AG04449 (cell line): ENCODE measurements at regions of chr5 and their contacts with region 1.

Region 1: GRCh38 chr5:149228618-149229297 is 42.9 kb upstream of the AFAP1L1 start:
- DNase-seq: peak; percentile 55
- H3K4me3 ChIP-seq: no peak overlapping the region
- CTCF ChIP-seq: peak; percentile 67

Region 2: DNA sequence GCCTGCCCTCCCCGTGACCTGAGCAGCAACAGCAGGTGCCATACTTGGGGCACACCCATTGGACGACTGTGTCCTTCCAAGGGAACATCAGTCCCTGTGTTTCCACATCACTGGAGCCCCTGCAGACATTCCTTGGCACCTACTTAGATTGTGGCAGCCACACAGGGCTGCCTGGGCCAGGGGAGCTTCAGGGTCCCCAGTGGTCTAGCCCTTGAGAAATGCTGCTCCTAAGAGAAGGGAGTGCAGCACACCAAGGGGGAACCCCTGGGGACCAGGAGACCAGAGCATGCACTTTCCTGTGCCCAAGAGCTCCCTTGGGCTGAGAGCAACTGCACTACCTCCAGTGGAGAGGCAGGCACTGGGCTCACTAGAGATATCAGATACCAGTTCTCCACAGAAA is 107.6 kb before region 1 on chr5:
- CTCF ChIA-PET with region 1: interaction called, 47 read pairs
- POLR2A ChIA-PET with region 1: no interaction called
- DNase-seq: no peak
- H3K4me3 ChIP-seq: no peak overlapping the region
- CTCF ChIP-seq: no peak

Region 3: DNA sequence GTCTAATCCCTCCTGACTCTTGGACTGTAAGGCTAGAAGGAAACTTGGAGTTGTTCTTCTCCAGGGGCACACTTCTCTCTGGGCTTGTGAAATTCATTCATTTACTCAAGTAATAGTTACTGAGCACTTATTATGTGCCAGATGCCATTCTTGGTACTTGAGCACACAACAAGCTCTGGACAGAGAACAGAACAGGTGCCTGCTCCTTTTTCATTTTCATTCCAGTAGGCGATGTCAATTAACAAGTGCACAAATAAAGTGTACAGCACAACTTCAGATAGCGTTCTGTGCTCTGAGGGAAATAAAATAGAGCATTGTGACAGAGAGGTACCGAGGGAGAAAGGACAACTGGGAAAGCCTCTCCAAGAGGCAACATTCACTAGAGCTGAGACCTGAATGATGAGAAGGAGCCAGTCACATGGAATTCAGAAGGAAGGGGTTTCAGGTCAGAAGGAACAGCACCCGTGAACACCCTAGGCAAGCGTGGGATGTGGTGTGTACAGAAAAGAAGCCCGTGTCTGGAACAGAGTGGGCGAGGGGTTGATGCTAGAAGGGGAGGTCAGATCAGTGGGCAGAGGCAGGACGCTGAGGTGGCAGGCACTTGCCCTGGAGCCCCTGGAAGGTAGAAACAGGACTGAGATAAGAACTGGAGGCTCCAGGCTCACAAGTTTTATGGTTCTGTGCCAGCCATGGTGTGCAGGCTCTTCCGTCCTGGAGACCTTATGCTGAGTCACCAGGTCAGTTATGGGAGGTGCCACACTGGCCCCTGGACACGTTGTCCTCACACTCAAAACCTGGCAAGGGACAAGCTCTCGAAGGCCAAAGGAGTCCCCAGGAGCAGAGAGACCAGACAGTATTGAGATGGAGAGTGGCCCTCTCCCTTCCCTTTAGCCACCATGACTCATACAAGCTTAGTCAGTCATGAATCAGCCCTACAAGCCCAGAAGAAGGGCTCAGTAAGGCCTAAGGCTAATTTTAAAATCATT is 94.7 kb before region 1 on chr5:
- CTCF ChIA-PET with region 1: interaction called, 249 read pairs
- POLR2A ChIA-PET with region 1: no interaction called
- DNase-seq: no peak
- H3K4me3 ChIP-seq: no peak overlapping the region
- CTCF ChIP-seq: no peak

Region 4: GRCh38 chr5:149212198-149212951 is 16.4 kb before region 1 on chr5:
- CTCF ChIA-PET with region 1: interaction called, 25 read pairs
- POLR2A ChIA-PET with region 1: interaction called, 3 read pairs
- DNase-seq: peak; percentile 98
- H3K4me3 ChIP-seq: no peak overlapping the region
- CTCF ChIP-seq: no peak

Region 5: DNA sequence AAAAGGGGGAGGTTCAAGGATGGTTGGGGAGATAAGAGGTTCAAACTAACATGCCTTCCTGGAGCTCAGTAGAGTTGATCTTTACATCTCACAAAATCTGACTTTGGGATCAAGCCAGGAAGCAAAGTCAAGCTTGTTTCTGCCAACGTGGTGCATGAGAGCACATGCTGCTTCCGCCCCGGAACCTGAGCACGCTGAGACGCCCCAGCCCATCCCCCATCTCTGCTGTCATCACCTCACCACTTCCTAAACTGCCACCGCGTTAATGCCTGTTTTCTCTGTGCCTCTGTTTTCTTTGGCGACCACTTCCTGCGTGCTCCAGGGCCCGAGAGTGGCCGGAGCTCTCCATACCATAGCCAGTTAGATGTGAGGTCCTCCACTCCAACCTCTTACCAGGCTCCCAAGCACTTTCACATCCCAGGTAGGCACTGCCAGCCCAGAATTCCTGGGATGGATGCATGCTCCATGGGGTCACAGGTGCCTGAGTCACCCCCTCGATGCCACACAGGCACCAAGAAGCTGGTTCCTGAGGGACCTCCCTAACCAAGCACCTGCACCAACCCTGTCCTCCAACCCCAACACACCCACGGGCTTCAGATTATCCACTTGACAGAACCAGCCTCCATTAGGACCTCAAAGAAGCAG is 11.7 kb after region 1 on chr5:
- CTCF ChIA-PET with region 1: interaction called, 21 read pairs
- POLR2A ChIA-PET with region 1: no interaction called
- DNase-seq: no peak
- H3K4me3 ChIP-seq: no peak overlapping the region
- CTCF ChIP-seq: no peak